GM12878 (cell line): ENCODE measurements at regions of chrX and their contacts with region 1.

Region 1: DNA sequence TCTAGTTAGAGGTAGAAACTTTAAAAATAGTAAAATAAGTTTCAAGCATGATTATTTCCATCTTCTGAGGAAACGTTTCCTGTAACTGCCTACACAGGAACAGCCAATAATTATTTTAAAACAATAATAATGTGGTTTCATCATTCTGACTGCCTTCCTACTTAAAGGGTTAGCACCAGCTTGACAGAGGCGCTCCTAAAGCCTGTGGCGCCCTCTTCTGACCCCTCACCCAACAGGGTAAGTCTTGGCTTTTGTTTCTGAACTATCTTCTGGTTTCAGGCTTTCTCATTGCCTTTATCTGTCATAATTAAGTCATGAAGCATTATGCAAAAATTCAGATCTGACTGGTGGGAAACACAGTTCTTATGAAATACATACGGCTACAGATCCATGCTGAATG is 96.7 kb downstream of the ITM2A start:
- DNase-seq: peak; percentile 63
- ATAC-seq: peak; percentile 99
- H3K4me3 ChIP-seq: no peak overlapping the region
- H3K27ac ChIP-seq: no peak overlapping the region
- H3K4me1 ChIP-seq: no peaks in the 10 kb centered on the region
- H3K27me3 ChIP-seq: no peaks in the 10 kb centered on the region
- CTCF ChIP-seq: peak; percentile 74 to 91 (median 74); a peak in 5 of 6 replicates
- EP300 ChIP-seq: no peak
- POLR2A ChIP-seq: no peak
- RAD21 ChIP-seq: peak; percentile 97

Region 2: GRCh38 chrX:78555401-78555980 is 714.9 kb before region 1 on chrX:
- CTCF ChIA-PET with region 1: interaction called, 9 read pairs
- POLR2A ChIA-PET with region 1: no interaction called
- RAD21 ChIA-PET with region 1: interaction called, 8 read pairs
- SMC1A ChIA-PET with region 1: interaction called, 12 read pairs
- in situ Hi-C with region 1: loop called (anchors 25 kb)
- intact Hi-C with region 1: loop called (anchors 1 kb)
- DNase-seq: no peak
- ATAC-seq: peak; percentile 48; the same call in 2 of the 3 replicates
- H3K4me3 ChIP-seq: no peak overlapping the region
- H3K27ac ChIP-seq: no peak overlapping the region
- H3K4me1 ChIP-seq: no peaks in the 10 kb centered on the region
- H3K27me3 ChIP-seq: no peaks in the 10 kb centered on the region
- CTCF ChIP-seq: peak; percentile 28 to 58 (median 49); a peak in 4 of 6 replicates
- EP300 ChIP-seq: no peak
- POLR2A ChIP-seq: no peak
- RAD21 ChIP-seq: peak; percentile 79

Region 3: DNA sequence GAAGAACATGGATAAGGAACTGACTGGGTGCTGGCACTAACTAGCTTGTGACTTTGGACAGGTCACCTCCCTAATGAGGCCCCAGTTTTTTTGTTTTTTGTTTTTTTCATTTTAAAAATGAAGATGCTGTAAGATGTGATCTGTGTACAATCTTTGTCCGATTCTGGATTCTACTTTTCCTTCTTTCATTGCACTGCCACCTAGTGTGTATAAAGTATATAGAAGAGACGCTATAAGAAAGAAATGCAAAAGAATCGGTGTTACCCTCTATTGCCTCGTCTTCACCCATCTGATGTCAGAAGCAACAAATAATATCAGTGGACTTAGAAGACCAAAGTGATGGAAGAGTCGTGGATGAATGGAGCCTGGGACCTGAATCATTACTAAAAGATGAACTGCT is 383.9 kb before region 1 on chrX:
- CTCF ChIA-PET with region 1: interaction called, 5 read pairs
- POLR2A ChIA-PET with region 1: no interaction called
- RAD21 ChIA-PET with region 1: interaction called, 3 read pairs
- SMC1A ChIA-PET with region 1: interaction called, 4 read pairs
- in situ Hi-C with region 1: no loop called
- intact Hi-C with region 1: loop called (anchors 5 kb)
- DNase-seq: peak; percentile 5
- ATAC-seq: peak; percentile 85
- H3K4me3 ChIP-seq: no peak overlapping the region
- H3K27ac ChIP-seq: no peak overlapping the region
- H3K4me1 ChIP-seq: no peaks in the 10 kb centered on the region
- H3K27me3 ChIP-seq: no peaks in the 10 kb centered on the region
- CTCF ChIP-seq: peak; percentile 28 to 47 (median 38); a peak in 3 of 6 replicates
- EP300 ChIP-seq: no peak
- POLR2A ChIP-seq: no peak
- RAD21 ChIP-seq: no peak

Region 4: DNA sequence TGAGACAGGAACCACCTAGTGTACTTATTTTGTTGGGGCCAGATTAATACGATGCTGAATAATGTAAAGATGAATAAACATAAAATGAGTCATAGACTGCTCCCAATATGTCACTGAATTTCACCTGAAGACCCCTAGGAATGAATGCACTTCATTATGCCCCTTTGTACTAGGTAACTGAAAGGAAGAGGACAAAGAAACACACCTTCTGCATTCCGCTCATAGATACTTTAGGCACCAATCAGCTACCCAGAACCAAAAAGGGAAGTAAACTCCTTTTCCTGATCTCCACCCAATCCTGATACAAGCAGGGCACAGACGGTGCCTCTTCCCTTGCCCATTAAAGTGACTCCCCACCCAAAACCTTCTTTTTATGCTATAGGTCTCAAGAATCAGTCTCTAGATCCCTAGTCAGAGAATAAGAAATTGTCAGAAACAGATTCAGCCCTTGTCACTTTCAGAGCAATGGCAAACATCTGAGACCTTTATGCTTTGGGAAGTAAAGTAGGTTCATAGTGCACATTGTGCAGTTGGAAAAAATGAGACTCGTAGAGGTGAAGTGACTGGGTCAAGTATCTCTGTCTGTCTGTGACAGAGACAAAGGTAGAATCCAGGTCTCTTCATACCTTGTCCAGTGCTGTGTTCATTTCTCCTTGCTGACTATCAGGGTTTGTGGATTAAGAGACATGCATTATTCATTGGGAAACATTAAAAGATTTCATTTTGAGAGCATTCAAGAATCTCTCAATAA is 123.6 kb before region 1 on chrX:
- CTCF ChIA-PET with region 1: interaction called, 4 read pairs
- POLR2A ChIA-PET with region 1: interaction called, 9 read pairs
- RAD21 ChIA-PET with region 1: interaction called, 18 read pairs
- SMC1A ChIA-PET with region 1: interaction called, 7 read pairs
- in situ Hi-C with region 1: no loop called
- intact Hi-C with region 1: loop called (anchors 1 kb)
- DNase-seq: peak; percentile 45
- ATAC-seq: peak; percentile 52
- H3K4me3 ChIP-seq: peak overlapping the region; percentile 39
- H3K27ac ChIP-seq: peak overlapping the region; percentile 73
- H3K4me1 ChIP-seq: peaks cover 8% of the 10 kb centered on the region
- H3K27me3 ChIP-seq: no peaks in the 10 kb centered on the region
- CTCF ChIP-seq: no peak
- EP300 ChIP-seq: no peak
- POLR2A ChIP-seq: no peak
- RAD21 ChIP-seq: no peak

Region 5: GRCh38 chrX:79161655-79162054 is 108.7 kb before region 1 on chrX:
- CTCF ChIA-PET with region 1: no interaction called
- POLR2A ChIA-PET with region 1: no interaction called
- RAD21 ChIA-PET with region 1: interaction called, 4 read pairs
- SMC1A ChIA-PET with region 1: interaction called, 10 read pairs
- in situ Hi-C with region 1: no loop called
- intact Hi-C with region 1: no loop called
- DNase-seq: peak; percentile 72
- ATAC-seq: peak; percentile 85
- H3K4me3 ChIP-seq: no peak overlapping the region
- H3K27ac ChIP-seq: peak overlapping the region; percentile 1; the same call in 1 of the 2 replicates
- H3K4me1 ChIP-seq: peaks cover 3% of the 10 kb centered on the region
- H3K27me3 ChIP-seq: no peaks in the 10 kb centered on the region
- CTCF ChIP-seq: no peak
- EP300 ChIP-seq: peak in 1 of 2 experiments; percentile 27; a peak in 2 of 4 replicates
- POLR2A ChIP-seq: no peak
- RAD21 ChIP-seq: no peak

Region 6: DNA sequence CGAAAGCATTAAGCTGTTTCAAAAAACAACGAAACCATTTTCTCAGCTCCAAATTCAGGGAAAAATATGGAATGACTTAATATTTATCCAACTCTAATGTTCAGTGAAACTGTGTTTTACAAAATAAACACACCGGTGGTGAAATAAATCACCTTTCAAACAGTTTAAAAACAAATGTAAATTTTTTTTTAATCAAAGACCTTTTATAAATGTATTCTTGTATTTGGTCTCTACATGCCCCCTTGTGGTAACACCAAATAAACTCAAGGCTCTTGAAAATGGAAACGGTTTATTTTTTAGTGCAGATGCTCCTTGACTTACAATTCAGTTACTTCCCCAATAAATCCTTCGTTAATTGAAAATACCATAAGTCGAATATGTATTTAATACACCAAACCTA is 142.6 kb after region 1 on chrX:
- CTCF ChIA-PET with region 1: interaction called, 18 read pairs
- POLR2A ChIA-PET with region 1: no interaction called
- RAD21 ChIA-PET with region 1: interaction called, 3 read pairs
- SMC1A ChIA-PET with region 1: interaction called, 3 read pairs
- in situ Hi-C with region 1: no loop called
- intact Hi-C with region 1: loop called (anchors 5 kb)
- DNase-seq: no peak
- ATAC-seq: no peak
- H3K4me3 ChIP-seq: no peak overlapping the region
- H3K27ac ChIP-seq: no peak overlapping the region
- H3K4me1 ChIP-seq: no peaks in the 10 kb centered on the region
- H3K27me3 ChIP-seq: no peaks in the 10 kb centered on the region
- CTCF ChIP-seq: peak in 2 of 3 experiments; percentile 14 to 34; a peak in 4 of 6 replicates
- EP300 ChIP-seq: no peak
- POLR2A ChIP-seq: no peak
- RAD21 ChIP-seq: peak; percentile 62

Region 7: GRCh38 chrX:79440336-79440735 is 169.9 kb after region 1 on chrX:
- CTCF ChIA-PET with region 1: no interaction called
- POLR2A ChIA-PET with region 1: no interaction called
- RAD21 ChIA-PET with region 1: no interaction called
- SMC1A ChIA-PET with region 1: no interaction called
- in situ Hi-C with region 1: no loop called
- intact Hi-C with region 1: no loop called
- DNase-seq: no peak
- ATAC-seq: no peak
- H3K4me3 ChIP-seq: no peak overlapping the region
- H3K27ac ChIP-seq: no peak overlapping the region
- H3K4me1 ChIP-seq: no peaks in the 10 kb centered on the region
- H3K27me3 ChIP-seq: no peaks in the 10 kb centered on the region
- CTCF ChIP-seq: no peak
- EP300 ChIP-seq: no peak
- POLR2A ChIP-seq: no peak
- RAD21 ChIP-seq: no peak